ENCODE measurements at regions of chrX and their contacts with region 1.

Region 1: DNA sequence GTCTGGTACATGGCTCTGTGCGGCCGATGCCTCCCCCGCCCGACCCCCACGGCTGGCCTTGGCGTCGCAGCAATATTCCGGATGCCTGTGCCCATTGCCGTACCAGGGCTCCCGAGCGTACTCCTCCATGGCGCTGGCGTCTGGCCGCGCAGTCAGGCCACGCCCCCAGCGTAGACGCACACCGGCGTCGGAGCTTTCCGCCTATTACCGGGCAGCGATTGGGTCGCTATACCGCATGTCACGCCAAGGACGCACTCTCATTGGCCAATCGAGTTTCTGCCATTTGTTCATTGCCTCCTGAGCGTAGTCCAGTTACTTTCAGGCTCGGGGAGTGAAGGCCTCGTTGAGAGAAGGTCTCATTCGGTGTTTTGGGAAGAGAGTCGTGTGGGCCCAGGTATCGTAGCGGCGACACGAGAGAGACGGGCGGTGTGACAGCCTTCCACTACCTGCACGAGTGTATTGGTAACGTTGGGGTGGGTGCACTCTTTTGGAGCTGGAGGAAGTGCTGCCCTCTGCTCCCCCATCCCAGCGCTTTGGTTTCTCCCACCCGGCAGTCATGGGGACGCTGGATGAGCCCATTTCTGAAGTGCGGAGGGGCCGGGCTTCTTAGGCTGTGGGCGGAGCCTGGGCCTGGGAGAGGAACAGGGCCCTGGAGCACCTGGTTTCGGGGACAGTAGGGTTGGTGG is at the starts of genes PQBP1 and TIMM17B:
- DNase-seq: peak; percentile 92
- ATAC-seq: peak; percentile 94
- H3K4me3 Mint-ChIP-seq: peak within 1 kb of the TSS; percentile 81
- H3K27ac Mint-ChIP-seq: peak within 1 kb of the TSS; percentile 94
- H3K4me1 Mint-ChIP-seq: peaks cover 19% of the 10 kb centered on the region
- H3K27me3 Mint-ChIP-seq: no peaks in the 10 kb centered on the region
- total RNA-seq, gene PQBP1: 73.4 to 75.3 TPM
- total RNA-seq, gene TIMM17B: 54.2 to 58.9 TPM

Region 2: GRCh38 chrX:48911412-48912182 is 13.8 kb after region 1 on chrX and contains the start of gene SLC35A2:
- CTCF ChIA-PET with region 1: no interaction called
- POLR2A ChIA-PET with region 1: interaction called, 14 read pairs
- intact Hi-C with region 1: loop called in 1 of 2 experiments (anchors 1 kb)
- DNase-seq: peak; percentile 93
- ATAC-seq: peak; percentile 69
- H3K4me3 Mint-ChIP-seq: peak within 1 kb of the TSS; percentile 97
- H3K27ac Mint-ChIP-seq: peak within 1 kb of the TSS; percentile 92
- H3K4me1 Mint-ChIP-seq: peaks cover 39% of the 10 kb centered on the region
- H3K27me3 Mint-ChIP-seq: no peaks in the 10 kb centered on the region
- total RNA-seq, gene SLC35A2: 19.7 to 20.3 TPM

Region 3: DNA sequence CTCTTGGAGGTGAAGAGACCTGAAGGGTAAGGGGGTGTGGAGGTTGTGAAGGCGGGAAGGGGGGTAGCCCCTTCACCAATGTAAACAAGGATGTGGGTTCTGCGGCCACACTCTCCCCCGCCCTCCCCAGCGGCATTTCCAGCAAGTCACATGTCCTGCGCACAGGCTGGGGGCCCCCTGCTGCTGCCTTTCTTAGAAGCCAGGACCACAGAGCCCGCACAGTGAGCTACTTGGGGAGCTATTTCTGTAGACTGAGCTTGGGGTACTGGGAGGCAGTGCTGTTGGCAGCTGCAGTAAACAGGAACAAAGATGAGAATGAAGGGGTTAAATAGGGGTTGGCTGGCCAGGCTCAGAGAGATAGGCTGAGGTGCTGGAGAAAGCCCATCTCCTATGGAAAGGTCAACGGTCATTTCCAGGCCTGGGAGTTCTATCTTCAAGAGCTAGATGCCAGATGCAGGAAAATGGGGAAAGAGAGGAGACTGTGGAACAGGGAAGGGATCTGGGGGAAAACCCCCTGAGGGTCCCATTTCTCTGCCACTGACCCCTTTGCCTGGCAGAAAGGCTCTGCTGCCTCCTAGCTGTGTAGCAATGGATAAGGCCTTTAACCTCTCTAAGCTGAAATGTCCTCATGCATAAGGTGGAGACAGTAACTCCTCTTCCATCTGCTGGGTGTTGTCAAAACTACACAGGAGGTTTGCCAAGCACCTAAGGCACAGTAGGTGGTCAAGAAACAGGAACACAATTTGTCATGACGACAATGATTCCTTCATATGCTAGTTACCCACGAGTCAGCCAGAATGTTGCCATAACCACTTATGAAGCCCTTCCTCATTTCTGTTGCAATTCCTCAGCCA is 39.5 kb after region 1 on chrX:
- CTCF ChIA-PET with region 1: interaction called, 3 read pairs
- POLR2A ChIA-PET with region 1: interaction called, 18 read pairs
- intact Hi-C with region 1: loop called (anchors 1 to 10 kb)
- DNase-seq: peak; percentile 93
- ATAC-seq: peak; percentile 61
- H3K4me3 Mint-ChIP-seq: peak overlapping the region; percentile 64
- H3K27ac Mint-ChIP-seq: peak overlapping the region; percentile 96
- H3K4me1 Mint-ChIP-seq: peaks cover 81% of the 10 kb centered on the region
- H3K27me3 Mint-ChIP-seq: no peaks in the 10 kb centered on the region

Region 4: GRCh38 chrX:48945516-48946348 is 48.0 kb after region 1 on chrX:
- CTCF ChIA-PET with region 1: interaction called, 3 read pairs
- POLR2A ChIA-PET with region 1: interaction called, 3 read pairs
- intact Hi-C with region 1: loop called in 1 of 2 experiments (anchors 10 kb)
- DNase-seq: peak; percentile 71
- ATAC-seq: peak; percentile 42
- H3K4me3 Mint-ChIP-seq: peak overlapping the region; percentile 17
- H3K27ac Mint-ChIP-seq: peak overlapping the region; percentile 84
- H3K4me1 Mint-ChIP-seq: peaks cover 50% of the 10 kb centered on the region
- H3K27me3 Mint-ChIP-seq: no peaks in the 10 kb centered on the region

Region 5: GRCh38 chrX:48989483-48989882 is 91.7 kb after region 1 on chrX:
- CTCF ChIA-PET with region 1: no interaction called
- POLR2A ChIA-PET with region 1: no interaction called
- intact Hi-C with region 1: no loop called
- DNase-seq: no peak
- ATAC-seq: no peak
- H3K4me3 Mint-ChIP-seq: no peak overlapping the region
- H3K27ac Mint-ChIP-seq: no peak overlapping the region
- H3K4me1 Mint-ChIP-seq: no peaks in the 10 kb centered on the region
- H3K27me3 Mint-ChIP-seq: no peaks in the 10 kb centered on the region

Region 6: GRCh38 chrX:49002091-49002935 is 104.5 kb after region 1 on chrX and contains the start of gene GRIPAP1:
- CTCF ChIA-PET with region 1: no interaction called
- POLR2A ChIA-PET with region 1: no interaction called
- intact Hi-C with region 1: loop called in 1 of 2 experiments (anchors 1 kb)
- DNase-seq: peak; percentile 87
- ATAC-seq: peak; percentile 82
- H3K4me3 Mint-ChIP-seq: peak within 1 kb of the TSS; percentile 97
- H3K27ac Mint-ChIP-seq: peak within 1 kb of the TSS; percentile 98
- H3K4me1 Mint-ChIP-seq: peaks cover 34% of the 10 kb centered on the region
- H3K27me3 Mint-ChIP-seq: no peaks in the 10 kb centered on the region
- total RNA-seq, gene GRIPAP1: 57.8 to 63.3 TPM

Measured in activated CD4-positive, alpha-beta T cell treated with anti-CD3 and anti-CD28 coated beads for 36 hours (primary cell).